WTC11 (cell line): ENCODE measurements at regions of chr6 and their contacts with region 1.

Region 1: DNA sequence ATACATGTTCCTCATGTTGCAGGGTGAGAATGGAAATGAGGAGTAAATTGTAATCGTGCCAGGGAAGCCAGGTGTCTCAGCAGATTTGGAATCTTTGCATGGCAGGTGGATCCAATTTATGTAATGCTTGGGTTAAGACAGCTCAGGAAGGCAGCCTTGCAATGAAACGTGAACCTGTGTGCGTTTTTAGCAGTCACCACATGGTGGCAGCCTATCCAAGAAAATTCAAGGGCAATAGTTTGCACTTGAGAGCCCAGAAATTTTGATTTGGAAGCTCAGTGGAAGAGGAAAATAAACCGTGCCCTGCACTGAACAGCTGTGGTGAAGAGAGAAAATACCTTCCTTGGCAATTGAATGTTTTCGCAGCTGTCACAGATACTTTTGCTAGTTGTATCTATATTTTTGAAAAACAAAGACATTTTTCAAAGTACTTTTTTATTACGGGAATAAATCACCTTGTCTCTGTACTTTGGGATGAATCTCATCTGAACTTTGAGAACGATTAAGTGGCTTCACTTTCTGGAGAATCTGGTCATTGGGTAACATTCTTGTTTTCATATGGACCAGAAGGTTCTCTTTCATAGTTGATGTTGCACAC is 26.5 kb downstream of the MTHFD1L start:
- DNase-seq: peak; percentile 74
- ATAC-seq: peak; percentile 87
- H3K4me3 Mint-ChIP-seq: no peak overlapping the region
- H3K27ac Mint-ChIP-seq: no peak overlapping the region
- H3K4me1 Mint-ChIP-seq: no peaks in the 10 kb centered on the region
- H3K27me3 Mint-ChIP-seq: no peaks in the 10 kb centered on the region
- CTCF ChIP-seq: peak; percentile 82

Region 2: GRCh38 chr6:150876598-150876997 is 15.4 kb before region 1 on chr6:
- CTCF ChIA-PET with region 1: interaction called, 14 read pairs
- POLR2A ChIA-PET with region 1: no interaction called
- DNase-seq: no peak
- ATAC-seq: no peak
- H3K4me3 Mint-ChIP-seq: no peak overlapping the region
- H3K27ac Mint-ChIP-seq: peak overlapping the region; percentile 65; the same call in 1 of the 2 replicates
- H3K4me1 Mint-ChIP-seq: peaks cover 63% of the 10 kb centered on the region
- H3K27me3 Mint-ChIP-seq: no peaks in the 10 kb centered on the region
- CTCF ChIP-seq: no peak

Region 3: GRCh38 chr6:150902142-150902776 is 10.3 kb after region 1 on chr6:
- CTCF ChIA-PET with region 1: interaction called, 41 read pairs
- POLR2A ChIA-PET with region 1: interaction called, 4 read pairs
- DNase-seq: no peak
- ATAC-seq: no peak
- H3K4me3 Mint-ChIP-seq: no peak overlapping the region
- H3K27ac Mint-ChIP-seq: peak overlapping the region; percentile 22; the same call in 1 of the 2 replicates
- H3K4me1 Mint-ChIP-seq: peaks cover 4% of the 10 kb centered on the region; the same call in 1 of the 2 replicates
- H3K27me3 Mint-ChIP-seq: no peaks in the 10 kb centered on the region
- CTCF ChIP-seq: no peak

Region 4: DNA sequence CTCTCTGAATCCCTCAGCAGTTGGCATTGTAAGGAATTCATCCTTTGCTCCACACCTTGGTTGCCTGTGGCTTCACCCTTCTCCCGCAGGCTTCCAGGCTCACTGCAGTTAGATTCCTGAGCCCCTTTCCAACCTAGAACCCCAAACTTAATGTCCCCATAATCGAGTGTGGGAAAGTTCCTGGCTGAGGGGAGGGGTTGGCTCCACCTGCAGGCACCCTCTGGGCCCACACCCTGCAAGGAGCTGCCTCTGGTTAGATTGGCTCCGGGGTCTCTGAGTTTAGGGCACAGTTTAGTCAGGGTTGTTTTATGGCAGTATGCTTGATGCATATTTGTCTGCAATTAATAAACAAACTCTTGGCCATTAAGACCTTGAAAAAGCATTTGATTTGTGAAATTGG is 36.9 kb after region 1 on chr6:
- CTCF ChIA-PET with region 1: interaction called, 24 read pairs
- POLR2A ChIA-PET with region 1: no interaction called
- DNase-seq: peak; percentile 39
- ATAC-seq: peak; percentile 88
- H3K4me3 Mint-ChIP-seq: no peak overlapping the region
- H3K27ac Mint-ChIP-seq: no peak overlapping the region
- H3K4me1 Mint-ChIP-seq: no peaks in the 10 kb centered on the region
- H3K27me3 Mint-ChIP-seq: no peaks in the 10 kb centered on the region
- CTCF ChIP-seq: no peak; the same call in 1 of the 2 replicates

Region 5: DNA sequence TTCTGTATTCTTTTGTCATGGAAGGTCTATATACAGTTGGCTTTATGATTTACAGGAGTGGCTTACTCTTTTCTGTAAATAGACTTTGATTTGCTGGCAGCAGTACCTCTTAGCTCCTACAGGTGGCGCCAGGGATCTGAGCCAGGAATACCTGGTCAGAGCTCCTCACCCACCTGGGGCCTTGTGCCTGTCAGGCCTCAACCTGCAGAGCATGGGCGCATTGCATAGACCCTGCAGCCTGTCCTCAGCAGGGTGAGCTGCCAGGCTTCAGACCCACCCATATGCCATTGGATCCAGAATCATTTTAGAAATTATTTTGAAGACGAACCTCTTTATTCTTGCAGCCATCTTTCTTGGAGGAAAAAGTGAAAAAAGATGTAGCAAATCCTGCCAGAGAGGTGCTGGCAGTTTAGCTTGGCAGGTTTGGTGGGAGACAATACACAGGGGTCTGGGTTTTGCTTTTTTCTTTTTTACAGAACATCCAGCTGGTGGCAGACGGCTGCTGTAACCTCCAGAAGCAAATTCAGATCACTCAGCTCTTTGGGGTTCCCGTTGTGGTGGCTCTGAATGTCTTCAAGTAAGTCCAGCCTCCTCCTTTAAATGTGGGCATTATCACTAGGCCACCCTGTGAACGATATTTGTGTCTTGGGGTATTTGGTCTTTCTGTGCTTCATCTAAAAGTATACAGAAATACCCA is 122.6 kb after region 1 on chr6:
- CTCF ChIA-PET with region 1: interaction called, 14 read pairs
- POLR2A ChIA-PET with region 1: no interaction called
- DNase-seq: peak; percentile 77
- ATAC-seq: peak; percentile 85
- H3K4me3 Mint-ChIP-seq: no peak overlapping the region
- H3K27ac Mint-ChIP-seq: peak overlapping the region; percentile 79
- H3K4me1 Mint-ChIP-seq: peaks cover 12% of the 10 kb centered on the region
- H3K27me3 Mint-ChIP-seq: no peaks in the 10 kb centered on the region
- CTCF ChIP-seq: peak; percentile 96

Region 6: GRCh38 chr6:151330134-151330696 is 438.2 kb after region 1 on chr6:
- CTCF ChIA-PET with region 1: interaction called, 34 read pairs
- POLR2A ChIA-PET with region 1: no interaction called
- DNase-seq: no peak
- ATAC-seq: no peak
- H3K4me3 Mint-ChIP-seq: no peak overlapping the region
- H3K27ac Mint-ChIP-seq: no peak overlapping the region
- H3K4me1 Mint-ChIP-seq: peaks cover 11% of the 10 kb centered on the region
- H3K27me3 Mint-ChIP-seq: peaks cover 6% of the 10 kb centered on the region; the same call in 1 of the 2 replicates
- CTCF ChIP-seq: no peak